Right ventricle myocardium inferior (tissue), 1 donor: ENCODE measurements at regions of chr10 and their contacts with region 1.

Region 1: DNA sequence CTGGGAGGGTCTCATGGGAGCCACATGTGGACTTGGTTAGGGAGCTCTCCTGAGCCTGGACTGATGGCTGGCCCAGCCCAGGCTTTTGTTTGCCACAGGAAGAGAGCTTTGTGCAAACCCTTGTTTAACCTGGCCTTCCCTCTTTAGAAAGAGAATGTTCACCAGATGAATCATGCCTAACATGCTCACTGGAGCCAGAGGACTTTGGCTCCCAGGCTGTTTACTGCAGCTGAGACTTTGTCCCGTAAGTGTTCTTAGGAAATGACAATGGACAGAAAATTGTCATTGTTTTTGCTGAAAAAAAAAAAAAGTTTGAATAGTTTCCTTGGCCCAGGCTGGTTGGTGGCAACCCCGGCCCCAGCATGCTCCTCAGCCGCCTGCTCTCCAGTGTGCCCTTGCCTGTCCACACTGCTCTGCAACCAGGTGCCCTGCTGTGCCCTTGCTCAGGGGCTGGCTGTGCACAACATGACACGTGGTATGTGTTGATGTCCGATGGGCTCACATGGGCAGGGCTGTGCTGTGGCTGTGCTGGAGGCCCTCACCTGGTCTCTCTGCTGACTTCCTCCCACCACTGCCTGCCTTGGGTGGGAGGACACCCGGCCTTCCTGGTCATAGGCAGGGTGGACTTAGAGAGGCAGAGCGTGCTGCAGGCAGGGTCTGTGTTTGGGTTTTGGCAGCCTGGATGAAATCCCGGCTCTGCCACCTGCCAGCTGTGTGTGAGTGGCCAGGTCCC is 215.3 kb upstream of the ZNF32 start:
- DNase-seq: peak; percentile 55
- ATAC-seq: peak; percentile 78

Region 2: GRCh38 chr10:43816351-43817321 is 47.4 kb before region 1 on chr10:
- intact Hi-C with region 1: loop called (anchors 5 kb)
- DNase-seq: no peak
- ATAC-seq: peak; percentile 92

Region 3: DNA sequence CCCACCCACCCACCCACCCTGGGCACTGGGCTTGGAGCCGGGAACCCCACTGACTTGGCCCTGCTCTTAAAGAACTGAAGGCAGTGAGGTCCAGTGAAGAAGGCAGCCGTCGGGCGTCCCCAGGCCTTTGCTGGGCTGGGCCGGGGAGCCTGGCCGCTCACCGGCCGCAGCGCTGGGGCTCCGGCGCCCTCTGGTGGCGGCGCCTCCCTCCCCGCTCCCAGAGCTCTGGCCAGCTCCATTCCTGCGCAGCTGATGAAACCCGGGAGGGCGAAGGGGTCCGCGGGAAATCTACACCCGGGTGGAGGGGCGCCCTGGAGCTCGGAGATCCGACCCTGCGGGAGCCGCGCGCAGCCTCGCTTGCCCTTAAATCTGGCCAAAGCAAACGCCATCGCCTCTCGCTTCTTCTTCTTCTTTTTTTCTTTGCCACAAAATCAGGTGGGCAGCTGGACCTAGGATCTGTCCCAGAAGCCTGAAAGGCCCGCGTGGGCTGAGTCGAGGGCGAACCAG is 522.6 kb after region 1 on chr10:
- intact Hi-C with region 1: no loop called
- DNase-seq: peak; percentile 81
- ATAC-seq: peak; percentile 80

Region 4: GRCh38 chr10:44463511-44464121 is 599.6 kb after region 1 on chr10:
- intact Hi-C with region 1: no loop called
- DNase-seq: no peak
- ATAC-seq: no peak